ENCODE measurements at regions of chr5 and their contacts with region 1.

Region 1: GRCh38 chr5:35926389-35927051 is 11.9 kb downstream of the CAPSL start:
- DNase-seq: peak; percentile 17 to 83 (median 68)
- ATAC-seq: peak; percentile 45 to 52
- H3K4me3 Mint-ChIP-seq: peak overlapping the region in 9 of 10 donors; percentile 14 to 87 (median 77)
- H3K27ac Mint-ChIP-seq: peak overlapping the region in 6 of 10 donors; percentile 12 to 93 (median 74)
- H3K4me1 Mint-ChIP-seq: peaks cover 25 to 38% (median 34%) of the 10 kb centered on the region in 4 donors
- H3K27me3 Mint-ChIP-seq: peaks cover 0 to 8% (median 1%) of the 10 kb centered on the region in 5 donors

Region 2: DNA sequence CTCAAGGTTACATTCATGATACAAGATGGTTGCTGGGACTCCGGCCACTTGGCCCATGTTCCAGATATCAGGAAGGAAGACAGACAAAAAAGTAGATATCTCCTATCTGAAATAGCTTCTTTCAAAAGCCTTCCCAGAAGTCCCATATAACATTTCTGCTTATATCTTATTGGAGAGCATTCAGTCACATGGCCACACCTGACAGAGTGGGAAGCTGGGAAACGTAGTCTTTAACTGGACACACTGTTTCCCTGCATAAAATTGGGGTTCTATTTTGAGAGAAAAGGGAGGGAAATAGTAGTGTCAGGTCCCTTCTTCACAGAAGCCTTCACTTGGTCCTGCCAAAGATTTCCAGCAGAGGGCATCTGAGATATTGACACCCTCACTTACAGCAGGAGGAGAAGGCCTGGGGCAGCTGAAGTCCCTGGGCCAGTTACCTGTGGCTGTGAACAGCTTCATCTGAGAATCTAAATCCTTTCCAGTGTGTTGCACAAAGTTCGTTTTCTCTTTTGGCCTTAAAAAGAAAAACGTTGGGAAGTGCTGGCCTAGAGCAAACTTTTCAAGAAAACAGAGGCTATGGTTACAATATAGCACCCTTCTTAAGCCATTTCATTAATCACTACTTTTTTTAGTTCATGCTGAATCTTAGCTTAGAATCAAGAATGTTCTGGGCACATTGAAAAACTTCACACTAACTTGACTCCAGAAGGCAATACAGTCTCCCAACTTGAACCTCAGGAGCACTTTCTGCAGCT is 275.3 kb before region 1 on chr5:
- POLR2A ChIA-PET with region 1: interaction called, 23 read pairs
- DNase-seq: peak; percentile 12 to 78 (median 64)
- ATAC-seq: peak; percentile 95 to 98
- H3K4me3 Mint-ChIP-seq: no peak overlapping the region
- H3K27ac Mint-ChIP-seq: peak overlapping the region; percentile 18 to 87 (median 74)
- H3K4me1 Mint-ChIP-seq: peaks cover 0 to 9% (median 6%) of the 10 kb centered on the region in 4 donors
- H3K27me3 Mint-ChIP-seq: no peaks in the 10 kb centered on the region

Region 3: DNA sequence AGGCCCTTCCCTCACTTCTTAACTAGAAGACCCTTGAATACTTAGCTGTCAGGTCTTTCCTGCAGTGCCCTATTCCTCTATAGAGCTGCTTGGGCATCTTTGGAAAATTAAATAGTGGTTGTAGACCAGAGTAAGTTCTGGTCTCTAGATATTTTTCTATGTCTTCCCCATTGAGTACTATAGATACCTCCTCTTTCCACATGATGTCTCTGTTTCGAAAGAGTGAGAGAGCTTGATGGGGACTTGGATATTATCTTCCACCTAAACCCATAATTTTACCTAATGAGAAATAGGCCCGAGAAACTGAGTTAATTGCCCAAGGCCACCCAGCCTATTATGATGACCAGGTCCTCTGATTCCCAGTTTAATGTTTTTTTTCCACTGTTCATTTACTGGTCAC is 268.6 kb before region 1 on chr5:
- POLR2A ChIA-PET with region 1: interaction called, 11 read pairs
- DNase-seq: peak in 2 of 10 donors; percentile 37 to 42
- ATAC-seq: peak; percentile 54 to 70
- H3K4me3 Mint-ChIP-seq: peak overlapping the region in 5 of 10 donors; percentile 0 to 63 (median 27)
- H3K27ac Mint-ChIP-seq: peak overlapping the region; percentile 21 to 87 (median 58)
- H3K4me1 Mint-ChIP-seq: peaks cover 12 to 27% (median 21%) of the 10 kb centered on the region in 4 donors
- H3K27me3 Mint-ChIP-seq: no peaks in the 10 kb centered on the region

Region 4: GRCh38 chr5:35672995-35673394 is 253.5 kb before region 1 on chr5:
- POLR2A ChIA-PET with region 1: interaction called, 11 read pairs
- DNase-seq: peak in 8 of 10 donors; percentile 9 to 73 (median 58)
- ATAC-seq: peak; percentile 78 to 79
- H3K4me3 Mint-ChIP-seq: peak overlapping the region; percentile 8 to 72 (median 56)
- H3K27ac Mint-ChIP-seq: peak overlapping the region; percentile 92 to 97 (median 95)
- H3K4me1 Mint-ChIP-seq: peaks cover 18 to 76% (median 58%) of the 10 kb centered on the region in 4 donors
- H3K27me3 Mint-ChIP-seq: no peaks in the 10 kb centered on the region

Region 5: GRCh38 chr5:35847961-35848360 is 78.6 kb before region 1 on chr5:
- POLR2A ChIA-PET with region 1: no interaction called
- DNase-seq: no peak
- ATAC-seq: no peak
- H3K4me3 Mint-ChIP-seq: no peak overlapping the region
- H3K27ac Mint-ChIP-seq: peak overlapping the region in 3 of 10 donors; percentile 65 to 81 (median 65)
- H3K4me1 Mint-ChIP-seq: peaks cover 11 to 41% (median 40%) of the 10 kb centered on the region in 4 donors
- H3K27me3 Mint-ChIP-seq: no peaks in the 10 kb centered on the region